CD4-positive, alpha-beta memory T cell (primary cell): ENCODE measurements at regions of chr1 and their contacts with region 1.

Region 1: DNA sequence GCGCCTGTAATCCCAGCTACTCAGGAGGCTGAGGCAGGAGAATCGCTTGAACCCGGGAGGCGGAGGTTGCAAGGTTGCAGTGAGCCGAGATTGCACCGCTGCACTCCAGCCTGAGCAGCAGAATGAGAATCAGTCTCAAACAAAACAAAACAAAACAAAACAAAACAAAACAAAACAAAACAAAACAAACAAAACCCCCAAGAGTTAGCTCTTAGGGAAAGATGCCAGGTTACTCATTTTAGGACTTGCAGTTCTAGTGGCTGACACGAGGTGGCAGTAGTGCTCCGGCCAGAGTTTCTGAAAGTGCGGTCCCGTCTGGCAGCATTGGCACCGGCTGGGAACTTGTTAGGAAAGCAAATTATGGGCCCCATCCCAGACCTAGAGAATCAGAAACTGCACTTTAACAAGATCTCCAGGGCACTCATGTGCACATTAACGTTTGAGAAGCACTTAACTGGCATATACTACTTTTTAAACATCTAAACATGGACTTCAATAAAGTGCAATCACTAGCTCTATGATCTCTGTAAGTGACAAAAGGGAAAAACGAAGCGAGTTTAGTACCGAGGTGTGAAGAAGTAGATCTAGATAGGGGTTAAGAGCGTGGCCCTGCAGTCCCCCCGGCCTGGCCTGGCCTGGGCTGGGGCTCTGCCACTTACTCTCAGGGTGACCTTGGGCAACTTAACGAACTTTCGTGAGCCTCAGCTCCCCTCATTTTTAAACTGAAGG is 41.9 kb upstream of the TNFRSF1B start:
- DNase-seq: peak; percentile 74 to 84 (median 76)
- H3K4me3 ChIP-seq: no peak overlapping the region
- H3K4me3 Mint-ChIP-seq: peak overlapping the region in 7 of 8 donors; percentile 37 to 67 (median 59)
- H3K27ac ChIP-seq: no peak overlapping the region
- H3K27ac Mint-ChIP-seq: peak overlapping the region; percentile 27 to 93 (median 84)
- H3K4me1 ChIP-seq: peaks cover 46% of the 10 kb centered on the region
- H3K4me1 Mint-ChIP-seq: peaks cover 25 to 61% (median 45%) of the 10 kb centered on the region in 4 donors
- H3K27me3 ChIP-seq: no peaks in the 10 kb centered on the region
- H3K27me3 Mint-ChIP-seq: no peaks in the 10 kb centered on the region

Region 2: GRCh38 chr1:11641776-11642305 is 483.0 kb before region 1 on chr1:
- CTCF ChIA-PET with region 1: no interaction called
- POLR2A ChIA-PET with region 1: no interaction called
- intact Hi-C with region 1: no loop called
- DNase-seq: no peak
- H3K4me3 ChIP-seq: no peak overlapping the region
- H3K4me3 Mint-ChIP-seq: no peak overlapping the region
- H3K27ac ChIP-seq: no peak overlapping the region
- H3K27ac Mint-ChIP-seq: no peak overlapping the region
- H3K4me1 ChIP-seq: no peaks in the 10 kb centered on the region
- H3K4me1 Mint-ChIP-seq: peaks cover 0 to 2% (median 0%) of the 10 kb centered on the region in 4 donors
- H3K27me3 ChIP-seq: no peaks in the 10 kb centered on the region
- H3K27me3 Mint-ChIP-seq: peaks cover 0 to 6% of the 10 kb centered on the region in 2 donors

Region 3: DNA sequence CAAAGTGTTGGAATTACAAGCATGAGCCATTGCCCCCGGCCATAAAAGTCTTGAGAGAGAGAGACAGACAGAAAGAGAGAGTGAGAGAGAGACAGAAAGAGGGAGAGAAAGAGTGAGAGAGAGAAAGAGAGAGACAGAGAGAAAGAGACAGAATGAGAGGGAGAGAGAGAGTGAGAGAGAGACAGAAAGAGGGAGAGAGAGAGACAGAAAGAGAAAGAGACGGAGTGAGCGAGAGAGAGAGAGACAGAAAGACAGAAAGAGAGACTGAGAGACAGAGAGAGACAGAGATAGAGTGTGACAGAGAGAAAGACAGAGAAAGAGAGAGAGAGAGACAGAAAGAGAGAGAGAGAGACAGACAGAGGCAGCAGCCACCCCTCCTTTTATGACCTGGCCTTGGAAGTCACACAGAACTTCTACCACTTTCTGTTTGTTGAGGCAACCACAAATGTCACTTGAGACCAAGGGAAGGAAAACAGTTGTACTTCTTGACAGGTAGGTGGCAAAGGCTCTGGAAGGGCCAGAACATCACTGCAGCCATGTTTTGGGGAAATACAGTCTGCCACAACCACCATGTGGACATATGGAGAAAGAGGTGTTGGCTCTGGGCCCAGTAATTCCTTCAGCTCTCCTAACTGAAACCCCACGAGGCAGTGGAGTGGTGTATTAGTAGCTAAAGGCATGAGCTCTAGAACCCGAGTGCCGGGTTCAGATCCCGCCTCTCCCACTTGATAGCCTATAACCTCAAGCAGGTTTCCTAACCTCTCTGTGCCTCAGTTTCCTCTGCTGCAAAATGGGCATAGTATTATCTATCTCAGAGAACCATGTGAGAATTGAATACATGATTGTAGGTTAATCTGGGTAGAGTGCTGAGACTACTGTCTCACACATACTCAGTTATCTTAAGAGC is 11.2 kb before region 1 on chr1:
- CTCF ChIA-PET with region 1: interaction called, 13 read pairs
- POLR2A ChIA-PET with region 1: no interaction called
- intact Hi-C with region 1: no loop called
- DNase-seq: no peak
- H3K4me3 ChIP-seq: no peak overlapping the region
- H3K4me3 Mint-ChIP-seq: no peak overlapping the region
- H3K27ac ChIP-seq: no peak overlapping the region
- H3K27ac Mint-ChIP-seq: no peak overlapping the region
- H3K4me1 ChIP-seq: peaks cover 4% of the 10 kb centered on the region
- H3K4me1 Mint-ChIP-seq: peaks cover 4 to 12% (median 8%) of the 10 kb centered on the region in 4 donors
- H3K27me3 ChIP-seq: no peaks in the 10 kb centered on the region
- H3K27me3 Mint-ChIP-seq: no peaks in the 10 kb centered on the region

Region 4: GRCh38 chr1:12161662-12162458 is 37.0 kb after region 1 on chr1:
- CTCF ChIA-PET with region 1: interaction called, 25 read pairs
- POLR2A ChIA-PET with region 1: interaction called, 1,713 read pairs
- intact Hi-C with region 1: no loop called
- DNase-seq: peak; percentile 70 to 93 (median 71)
- H3K4me3 ChIP-seq: peak overlapping the region in 1 of 2 donors; percentile 38
- H3K4me3 Mint-ChIP-seq: peak overlapping the region; percentile 24 to 90 (median 76)
- H3K27ac ChIP-seq: peak overlapping the region; percentile 65
- H3K27ac Mint-ChIP-seq: peak overlapping the region; percentile 91 to 100 (median 96)
- H3K4me1 ChIP-seq: peaks cover 92% of the 10 kb centered on the region
- H3K4me1 Mint-ChIP-seq: peaks cover 53 to 87% (median 71%) of the 10 kb centered on the region in 4 donors
- H3K27me3 ChIP-seq: no peaks in the 10 kb centered on the region
- H3K27me3 Mint-ChIP-seq: no peaks in the 10 kb centered on the region

Region 5: GRCh38 chr1:12177999-12178441 is 53.2 kb after region 1 on chr1:
- CTCF ChIA-PET with region 1: interaction called, 213 read pairs
- POLR2A ChIA-PET with region 1: interaction called, 1,713 read pairs
- intact Hi-C with region 1: loop called (anchors 1 kb)
- DNase-seq: peak; percentile 86 to 99 (median 90)
- H3K4me3 ChIP-seq: peak overlapping the region; percentile 8 to 32
- H3K4me3 Mint-ChIP-seq: peak overlapping the region; percentile 80 to 94 (median 88)
- H3K27ac ChIP-seq: peak overlapping the region; percentile 97
- H3K27ac Mint-ChIP-seq: peak overlapping the region; percentile 98 to 100 (median 99)
- H3K4me1 ChIP-seq: peaks cover 100% of the 10 kb centered on the region
- H3K4me1 Mint-ChIP-seq: peaks cover 45 to 98% (median 83%) of the 10 kb centered on the region in 4 donors
- H3K27me3 ChIP-seq: no peaks in the 10 kb centered on the region
- H3K27me3 Mint-ChIP-seq: peaks cover 0 to 3% of the 10 kb centered on the region in 2 donors

Region 6: DNA sequence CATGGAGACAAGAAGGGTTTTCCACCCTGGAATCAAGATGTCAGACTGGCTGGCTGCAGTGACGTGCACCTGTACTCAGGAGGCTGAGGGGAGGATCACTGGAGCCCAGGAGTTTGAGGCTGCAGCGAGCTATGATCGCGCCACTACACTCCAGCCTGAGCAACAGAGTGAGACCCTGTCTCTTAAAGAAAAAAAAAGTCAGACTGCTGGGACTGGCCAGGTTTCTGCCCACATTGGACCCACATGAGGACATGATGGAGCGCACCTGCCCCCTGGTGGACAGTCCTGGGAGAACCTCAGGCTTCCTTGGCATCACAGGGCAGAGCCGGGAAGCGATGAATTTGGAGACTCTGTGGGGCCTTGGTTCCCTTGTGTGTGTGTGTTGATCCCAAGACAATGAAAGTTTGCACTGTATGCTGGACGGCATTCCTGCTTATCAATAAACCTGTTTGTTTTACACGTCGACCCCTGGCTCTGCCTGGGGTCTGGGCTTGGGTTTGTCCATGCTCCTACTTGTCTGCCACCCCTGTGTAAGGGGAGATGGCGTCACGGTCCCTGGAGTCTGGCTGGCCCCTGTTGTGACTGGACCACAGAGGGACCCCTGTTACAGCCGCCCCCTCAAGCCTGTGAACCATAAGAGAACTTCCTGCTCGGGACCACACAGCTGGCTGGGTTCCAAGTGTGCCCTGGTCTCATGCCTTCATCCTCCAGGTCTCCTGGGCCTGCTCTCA is 84.1 kb after region 1 on chr1:
- CTCF ChIA-PET with region 1: interaction called, 296 read pairs
- POLR2A ChIA-PET with region 1: interaction called, 107 read pairs
- intact Hi-C with region 1: loop called (anchors 1 kb)
- DNase-seq: peak; percentile 72 to 85 (median 79)
- H3K4me3 ChIP-seq: no peak overlapping the region
- H3K4me3 Mint-ChIP-seq: peak overlapping the region in 7 of 8 donors; percentile 26 to 82 (median 47)
- H3K27ac ChIP-seq: peak overlapping the region; percentile 36
- H3K27ac Mint-ChIP-seq: peak overlapping the region; percentile 78 to 93 (median 88)
- H3K4me1 ChIP-seq: peaks cover 57% of the 10 kb centered on the region
- H3K4me1 Mint-ChIP-seq: peaks cover 39 to 71% (median 48%) of the 10 kb centered on the region in 4 donors
- H3K27me3 ChIP-seq: no peaks in the 10 kb centered on the region
- H3K27me3 Mint-ChIP-seq: no peaks in the 10 kb centered on the region

Region 7: GRCh38 chr1:12229835-12230548 is 105.1 kb after region 1 on chr1 and contains the start of gene VPS13D:
- CTCF ChIA-PET with region 1: interaction called, 169 read pairs
- POLR2A ChIA-PET with region 1: interaction called, 4 read pairs
- intact Hi-C with region 1: no loop called
- DNase-seq: peak; percentile 76 to 84 (median 83)
- H3K4me3 ChIP-seq: peak within 1 kb of the TSS; percentile 86 to 90
- H3K4me3 Mint-ChIP-seq: peak within 1 kb of the TSS; percentile 88 to 93 (median 91)
- H3K27ac ChIP-seq: peak within 1 kb of the TSS; percentile 82
- H3K27ac Mint-ChIP-seq: peak within 1 kb of the TSS in 6 of 7 donors; percentile 81 to 94 (median 92)
- H3K4me1 ChIP-seq: peaks cover 48% of the 10 kb centered on the region
- H3K4me1 Mint-ChIP-seq: peaks cover 13 to 27% (median 22%) of the 10 kb centered on the region in 4 donors
- H3K27me3 ChIP-seq: no peaks in the 10 kb centered on the region
- H3K27me3 Mint-ChIP-seq: no peaks in the 10 kb centered on the region
- total RNA-seq, gene VPS13D: 92.7 to 96.3 TPM

Region 8: DNA sequence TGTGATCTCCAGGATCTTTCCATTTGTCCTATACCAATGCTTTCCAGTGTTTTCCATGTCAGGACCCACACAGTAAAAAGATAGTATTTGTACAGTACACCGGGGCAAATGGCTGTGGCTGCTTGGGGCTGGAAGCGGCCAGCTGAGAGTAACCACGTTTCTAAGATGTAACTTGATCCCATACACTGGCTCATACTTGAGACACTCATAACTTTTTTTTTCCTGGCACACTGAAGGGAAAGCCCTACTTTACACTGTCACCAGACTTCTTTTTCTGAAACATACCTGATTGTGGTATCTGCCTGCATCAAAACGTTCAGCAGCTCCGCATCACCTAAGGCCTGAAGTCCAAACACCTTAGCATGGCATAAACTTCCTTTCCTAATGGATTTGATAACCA is 126.6 kb after region 1 on chr1:
- CTCF ChIA-PET with region 1: interaction called, 169 read pairs
- POLR2A ChIA-PET with region 1: no interaction called
- intact Hi-C with region 1: no loop called
- DNase-seq: no peak
- H3K4me3 ChIP-seq: no peak overlapping the region
- H3K4me3 Mint-ChIP-seq: no peak overlapping the region
- H3K27ac ChIP-seq: no peak overlapping the region
- H3K27ac Mint-ChIP-seq: no peak overlapping the region
- H3K4me1 ChIP-seq: no peaks in the 10 kb centered on the region
- H3K4me1 Mint-ChIP-seq: peaks cover 0 to under 1% (median 0%) of the 10 kb centered on the region in 4 donors
- H3K27me3 ChIP-seq: no peaks in the 10 kb centered on the region
- H3K27me3 Mint-ChIP-seq: no peaks in the 10 kb centered on the region